ENCODE measurements at regions of chr20 and their contacts with region 1.

Region 1: GRCh38 chr20:2162125-2162822 is 60.6 kb downstream of the STK35 start:
- DNase-seq: no peak
- ATAC-seq: peak; percentile 41
- H3K4me3 ChIP-seq: no peak overlapping the region
- H3K27ac ChIP-seq: no peak overlapping the region
- H3K4me1 ChIP-seq: no peaks in the 10 kb centered on the region
- H3K27me3 ChIP-seq: no peaks in the 10 kb centered on the region
- CTCF ChIP-seq: no peak

Region 2: DNA sequence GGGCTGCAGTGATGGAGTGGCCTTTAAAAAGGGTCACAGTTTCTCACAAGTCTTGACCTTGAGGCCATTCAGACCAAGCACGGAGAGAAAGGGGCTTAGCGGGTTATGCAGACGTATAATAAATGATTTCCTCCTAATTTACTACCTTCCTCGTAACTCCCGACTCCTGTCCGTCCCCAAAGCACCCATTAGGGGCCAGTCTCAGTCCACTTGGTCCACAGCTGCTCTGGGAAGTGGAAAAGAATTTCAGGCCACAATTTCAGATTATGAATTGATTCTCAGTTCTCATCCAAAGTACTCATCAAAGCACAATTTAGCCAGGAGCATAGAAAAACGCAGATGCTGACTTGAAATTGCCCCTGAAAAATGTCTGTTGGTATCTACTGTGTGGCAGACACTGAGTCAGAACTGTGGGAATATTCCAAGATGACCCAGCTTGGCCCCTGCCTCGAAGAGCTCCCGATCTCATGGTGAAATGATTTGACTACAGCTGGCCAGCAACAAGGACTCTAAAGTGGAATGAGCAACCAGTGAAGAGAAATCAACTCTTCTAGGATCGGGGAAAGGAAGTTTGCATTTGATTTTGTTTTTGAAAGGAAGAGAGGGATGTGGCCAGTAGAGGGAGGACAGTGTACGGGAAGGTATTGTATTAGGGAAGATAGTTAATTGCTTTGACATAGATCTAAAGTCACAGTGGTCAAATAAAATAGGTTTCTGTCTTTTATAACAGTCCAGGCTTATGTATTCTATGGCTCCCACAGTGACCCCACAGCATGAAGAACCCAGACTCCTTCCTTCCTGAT is 75.9 kb before region 1 on chr20:
- intact Hi-C with region 1: loop called (anchors 10 kb)
- DNase-seq: no peak
- ATAC-seq: no peak
- H3K4me3 ChIP-seq: no peak overlapping the region
- H3K27ac ChIP-seq: no peak overlapping the region
- H3K4me1 ChIP-seq: no peaks in the 10 kb centered on the region
- H3K27me3 ChIP-seq: peaks cover 31% of the 10 kb centered on the region
- CTCF ChIP-seq: no peak

Region 3: GRCh38 chr20:2387180-2387577 is 224.9 kb after region 1 on chr20:
- intact Hi-C with region 1: no loop called
- DNase-seq: no peak
- ATAC-seq: peak; percentile 37
- H3K4me3 ChIP-seq: no peak overlapping the region
- H3K27ac ChIP-seq: no peak overlapping the region
- H3K4me1 ChIP-seq: no peaks in the 10 kb centered on the region
- H3K27me3 ChIP-seq: no peaks in the 10 kb centered on the region
- CTCF ChIP-seq: peak; percentile 33

Measured in upper lobe of right lung (tissue), 1 donor.